ENCODE measurements at regions of chr3 and their contacts with region 1.

Region 1: GRCh38 chr3:153338487-153338886 is 176.5 kb downstream of the RAP2B start:
- DNase-seq: no peak
- H3K4me3 ChIP-seq: no peak overlapping the region
- H3K4me3 Mint-ChIP-seq: no peak overlapping the region
- H3K27ac Mint-ChIP-seq: no peak overlapping the region
- H3K4me1 ChIP-seq: peaks cover 7% of the 10 kb centered on the region; the same call in 1 of the 2 replicates
- H3K4me1 Mint-ChIP-seq: no peaks in the 10 kb centered on the region
- H3K27me3 ChIP-seq: no peaks in the 10 kb centered on the region
- H3K27me3 Mint-ChIP-seq: no peaks in the 10 kb centered on the region
- CTCF ChIP-seq: no peak

Region 2: DNA sequence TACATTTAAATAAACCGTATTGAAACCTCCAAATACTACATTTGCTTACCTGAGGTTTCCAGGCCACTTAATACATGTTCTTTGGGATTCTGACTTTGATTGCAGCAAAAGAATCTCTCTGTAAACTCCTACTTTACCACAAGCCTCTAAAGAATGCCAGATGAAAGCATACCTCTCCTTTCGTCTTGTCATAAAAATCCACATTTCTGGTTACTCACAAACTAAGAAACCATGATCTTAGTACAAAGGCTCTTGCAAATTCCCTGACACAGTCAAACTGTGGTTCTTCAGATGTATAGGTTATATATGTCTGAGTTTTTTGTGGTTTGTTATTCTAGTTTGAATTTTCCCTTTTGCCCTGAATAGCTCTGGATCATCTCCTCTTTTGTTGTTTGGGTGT is 11.9 kb after region 1 on chr3:
- CTCF ChIA-PET with region 1: no interaction called
- POLR2A ChIA-PET with region 1: interaction called, 12 read pairs
- intact Hi-C with region 1: no loop called
- DNase-seq: peak in 1 of 2 experiments; percentile 66
- H3K4me3 ChIP-seq: no peak overlapping the region
- H3K4me3 Mint-ChIP-seq: peak overlapping the region; percentile 60
- H3K27ac Mint-ChIP-seq: peak overlapping the region; percentile 94
- H3K4me1 ChIP-seq: peaks cover 39% of the 10 kb centered on the region
- H3K4me1 Mint-ChIP-seq: peaks cover 29% of the 10 kb centered on the region
- H3K27me3 ChIP-seq: no peaks in the 10 kb centered on the region
- H3K27me3 Mint-ChIP-seq: no peaks in the 10 kb centered on the region
- CTCF ChIP-seq: no peak

Region 3: DNA sequence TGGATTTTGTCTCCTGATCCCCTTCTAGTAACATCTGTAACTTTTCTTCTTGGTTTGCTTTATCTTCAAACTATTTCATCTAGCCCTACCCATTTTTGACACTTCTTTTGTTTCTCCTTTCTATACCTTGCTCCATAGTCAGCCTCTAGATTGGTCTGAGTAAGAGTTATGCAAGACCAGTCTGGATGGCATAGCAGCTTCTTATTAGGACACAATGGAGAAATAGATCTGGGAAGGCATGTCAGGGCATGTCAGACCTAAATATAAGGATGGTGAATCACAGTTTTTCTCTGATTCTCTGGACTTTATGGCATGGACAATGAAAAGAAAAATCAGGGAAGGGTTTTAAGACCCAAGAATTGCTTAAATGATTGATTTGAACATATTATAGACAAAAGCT is 276.1 kb after region 1 on chr3:
- CTCF ChIA-PET with region 1: no interaction called
- POLR2A ChIA-PET with region 1: no interaction called
- intact Hi-C with region 1: no loop called
- DNase-seq: no peak
- H3K4me3 ChIP-seq: no peak overlapping the region
- H3K4me3 Mint-ChIP-seq: no peak overlapping the region
- H3K27ac Mint-ChIP-seq: no peak overlapping the region
- H3K4me1 ChIP-seq: no peaks in the 10 kb centered on the region
- H3K4me1 Mint-ChIP-seq: no peaks in the 10 kb centered on the region
- H3K27me3 ChIP-seq: no peaks in the 10 kb centered on the region
- H3K27me3 Mint-ChIP-seq: no peaks in the 10 kb centered on the region
- CTCF ChIP-seq: no peak

Measured in Caco-2 (cell line).